MCF 10A (cell line): ENCODE measurements at regions of chr1 and their contacts with region 1.

Region 1: DNA sequence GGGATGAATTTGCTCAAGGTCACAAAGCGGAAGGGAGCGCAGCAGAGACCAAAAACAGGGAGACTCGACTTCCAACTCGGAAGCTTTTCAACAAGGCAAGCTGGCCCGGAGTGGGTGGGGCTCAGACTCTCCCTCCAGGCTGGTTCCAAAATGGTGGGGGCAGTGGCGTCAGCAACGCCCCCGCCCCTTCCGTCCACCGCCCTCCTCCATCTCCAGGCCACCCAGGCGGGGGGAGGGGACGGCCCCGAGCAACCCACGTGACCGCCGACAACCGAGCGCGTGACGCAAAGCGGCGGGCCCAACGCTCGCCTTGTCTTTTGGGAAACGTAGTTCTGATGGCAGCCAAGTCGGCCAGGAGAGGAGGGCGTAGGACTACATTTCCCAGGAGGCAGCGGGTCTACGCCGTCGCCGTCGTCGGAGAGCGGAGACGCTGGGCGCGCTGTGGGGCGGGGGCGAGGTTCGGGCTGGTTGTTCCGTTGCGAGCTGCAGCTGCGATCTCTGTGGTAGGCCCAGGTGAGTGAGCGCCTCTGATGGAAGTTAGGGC is at the start of gene THRAP3:
- DNase-seq: peak; percentile 99
- H3K4me3 Mint-ChIP-seq: peak within 1 kb of the TSS; percentile 92
- H3K27ac Mint-ChIP-seq: peak within 1 kb of the TSS; percentile 98
- H3K4me1 Mint-ChIP-seq: peaks cover 26% of the 10 kb centered on the region
- H3K27me3 Mint-ChIP-seq: no peaks in the 10 kb centered on the region
- CTCF ChIP-seq: no peak
- total RNA-seq, gene THRAP3: 92.2 and 116 TPM in 2 replicates

Region 2: DNA sequence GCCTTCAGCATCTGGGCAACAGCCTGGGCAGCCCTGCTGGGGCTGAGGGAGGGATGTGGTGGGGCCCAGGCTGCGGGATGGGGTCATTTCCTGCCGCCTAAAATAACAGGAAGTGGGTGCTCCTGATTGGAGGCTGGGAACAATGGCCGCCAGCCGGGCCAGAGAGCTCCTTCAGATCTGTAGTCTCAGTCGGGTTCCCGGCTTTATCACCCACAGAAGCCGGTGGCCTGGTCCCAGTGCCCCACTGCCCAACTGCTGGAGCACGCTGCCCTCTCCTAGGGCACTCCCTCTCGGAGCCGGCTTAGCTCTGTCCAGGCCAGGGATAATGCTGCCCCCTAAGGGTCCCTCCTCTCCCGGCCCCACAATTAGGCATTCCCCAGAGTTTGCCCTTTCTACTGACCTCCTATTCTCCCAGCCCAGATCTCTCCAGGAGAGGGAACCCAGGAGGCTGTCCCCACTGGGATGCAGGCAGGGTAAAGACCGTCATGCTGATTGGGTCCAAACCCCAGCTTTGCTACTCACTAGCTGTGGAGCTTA is 63.0 kb before region 1 on chr1:
- CTCF ChIA-PET with region 1: interaction called, 5 read pairs
- POLR2A ChIA-PET with region 1: interaction called, 24 read pairs
- intact Hi-C with region 1: no loop called
- DNase-seq: peak; percentile 59
- H3K4me3 Mint-ChIP-seq: peak overlapping the region; percentile 66
- H3K27ac Mint-ChIP-seq: peak overlapping the region; percentile 94
- H3K4me1 Mint-ChIP-seq: peaks cover 61% of the 10 kb centered on the region
- H3K27me3 Mint-ChIP-seq: no peaks in the 10 kb centered on the region
- CTCF ChIP-seq: peak; percentile 40

Region 3: DNA sequence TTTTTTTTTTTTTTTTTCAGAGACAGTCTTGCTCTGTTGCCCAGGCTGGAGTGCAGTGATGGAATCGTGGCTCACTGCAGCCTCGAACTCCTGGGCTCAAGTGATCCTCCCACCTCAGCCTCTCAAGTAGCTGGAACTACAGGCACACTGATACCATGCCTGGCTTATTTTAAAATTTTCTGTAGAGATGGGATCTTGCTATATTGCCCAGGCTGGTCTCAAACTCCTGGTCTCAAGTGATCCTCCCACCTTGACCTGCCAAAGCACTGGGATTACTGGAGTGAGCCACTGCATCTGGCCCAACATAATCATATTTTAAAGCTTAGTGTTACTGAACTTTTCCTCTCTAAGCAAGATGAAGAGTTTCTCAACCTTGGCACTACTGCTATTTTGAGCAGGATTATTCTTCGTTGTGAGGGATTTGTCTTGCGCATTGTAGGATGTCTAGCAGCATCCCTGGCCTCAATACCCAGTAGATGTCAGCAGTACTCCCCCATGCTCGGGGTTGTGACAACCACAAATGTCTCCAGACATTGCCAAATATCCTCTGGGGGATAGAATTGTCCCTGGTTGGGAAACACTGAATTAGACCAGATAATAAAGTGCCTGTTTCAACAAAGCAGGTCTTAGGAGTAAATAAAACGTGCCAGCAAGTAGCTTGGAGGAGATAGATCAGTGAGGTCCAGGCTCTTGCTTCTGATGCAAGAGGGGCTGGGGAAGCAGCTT is 14.9 kb before region 1 on chr1:
- CTCF ChIA-PET with region 1: interaction called, 5 read pairs
- POLR2A ChIA-PET with region 1: interaction called, 14 read pairs
- intact Hi-C with region 1: no loop called
- DNase-seq: no peak
- H3K4me3 Mint-ChIP-seq: no peak overlapping the region
- H3K27ac Mint-ChIP-seq: no peak overlapping the region
- H3K4me1 Mint-ChIP-seq: peaks cover 23% of the 10 kb centered on the region
- H3K27me3 Mint-ChIP-seq: no peaks in the 10 kb centered on the region
- CTCF ChIP-seq: no peak

Region 4: DNA sequence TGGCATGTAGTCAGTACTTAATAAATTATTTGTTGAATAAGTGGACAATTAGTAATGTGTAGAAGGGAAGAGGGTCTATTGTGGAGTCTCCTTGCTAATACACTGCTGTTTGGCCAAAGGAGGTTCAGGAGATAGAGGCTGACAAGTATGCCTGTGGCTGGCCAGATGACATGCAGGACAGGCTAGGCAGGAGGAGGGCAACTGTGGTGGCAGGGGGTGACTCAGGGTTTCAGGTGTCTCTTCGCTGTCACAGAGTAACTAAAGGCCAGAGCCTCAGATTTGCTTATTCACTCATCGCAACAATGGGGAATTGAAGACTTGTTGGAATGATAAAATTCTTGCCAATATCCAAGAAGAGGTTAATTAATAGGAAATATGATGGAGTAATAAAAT is 33.3 kb after region 1 on chr1:
- CTCF ChIA-PET with region 1: no interaction called
- POLR2A ChIA-PET with region 1: interaction called, 10 read pairs
- intact Hi-C with region 1: no loop called
- DNase-seq: no peak
- H3K4me3 Mint-ChIP-seq: peak overlapping the region; percentile 3
- H3K27ac Mint-ChIP-seq: peak overlapping the region; percentile 68
- H3K4me1 Mint-ChIP-seq: peaks cover 20% of the 10 kb centered on the region
- H3K27me3 Mint-ChIP-seq: no peaks in the 10 kb centered on the region
- CTCF ChIP-seq: no peak

Region 5: GRCh38 chr1:36300526-36300925 is 76.5 kb after region 1 on chr1:
- CTCF ChIA-PET with region 1: interaction called, 12 read pairs
- POLR2A ChIA-PET with region 1: interaction called, 18 read pairs
- intact Hi-C with region 1: no loop called
- DNase-seq: no peak
- H3K4me3 Mint-ChIP-seq: no peak overlapping the region
- H3K27ac Mint-ChIP-seq: peak overlapping the region; percentile 67
- H3K4me1 Mint-ChIP-seq: peaks cover 13% of the 10 kb centered on the region
- H3K27me3 Mint-ChIP-seq: no peaks in the 10 kb centered on the region
- CTCF ChIP-seq: no peak

Region 6: GRCh38 chr1:37391211-37392011 is 1167.3 kb after region 1 on chr1:
- CTCF ChIA-PET with region 1: no interaction called
- POLR2A ChIA-PET with region 1: no interaction called
- intact Hi-C with region 1: no loop called
- DNase-seq: no peak
- H3K4me3 Mint-ChIP-seq: no peak overlapping the region
- H3K27ac Mint-ChIP-seq: no peak overlapping the region
- H3K4me1 Mint-ChIP-seq: no peaks in the 10 kb centered on the region
- H3K27me3 Mint-ChIP-seq: peaks cover 46% of the 10 kb centered on the region
- CTCF ChIP-seq: no peak